GM10248 (cell line): ENCODE measurements at regions of chr6 and their contacts with region 1.

Region 1: GRCh38 chr6:89371849-89372505 is 19.5 kb upstream of the UBE2J1 start:
- DNase-seq: peak; percentile 75
- CTCF ChIP-seq: peak; percentile 98

Region 2: GRCh38 chr6:89297695-89298351 is 74.2 kb before region 1 on chr6:
- CTCF ChIA-PET with region 1: interaction called, 15 read pairs
- POLR2A ChIA-PET with region 1: no interaction called
- DNase-seq: peak; percentile 78
- CTCF ChIP-seq: no peak

Region 3: GRCh38 chr6:89352278-89353117 is 19.5 kb before region 1 on chr6 and contains the start of gene UBE2J1:
- CTCF ChIA-PET with region 1: interaction called, 75 read pairs
- POLR2A ChIA-PET with region 1: interaction called, 3 read pairs
- DNase-seq: peak; percentile 81
- CTCF ChIP-seq: no peak

Region 4: GRCh38 chr6:89385156-89385667 is 13.2 kb after region 1 on chr6:
- CTCF ChIA-PET with region 1: interaction called, 36 read pairs
- POLR2A ChIA-PET with region 1: no interaction called
- DNase-seq: no peak
- CTCF ChIP-seq: no peak

Region 5: GRCh38 chr6:89412071-89413005 is 40.4 kb after region 1 on chr6 and contains the start of gene RRAGD:
- CTCF ChIA-PET with region 1: interaction called, 35 read pairs
- POLR2A ChIA-PET with region 1: no interaction called
- DNase-seq: peak; percentile 82
- CTCF ChIP-seq: no peak